ENCODE measurements at regions of chr13 and their contacts with region 1.

Region 1: GRCh38 chr13:28718543-28719226 is at the start of gene SLC46A3:
- DNase-seq: peak; percentile 99
- ATAC-seq: peak; percentile 99
- total RNA-seq, gene SLC46A3: 17.4 TPM

Region 2: GRCh38 chr13:28110414-28110813 is 608.3 kb before region 1 on chr13:
- intact Hi-C with region 1: no loop called
- DNase-seq: no peak
- ATAC-seq: no peak

Region 3: GRCh38 chr13:28376604-28377003 is 342.1 kb before region 1 on chr13:
- intact Hi-C with region 1: no loop called
- DNase-seq: no peak
- ATAC-seq: no peak

Region 4: DNA sequence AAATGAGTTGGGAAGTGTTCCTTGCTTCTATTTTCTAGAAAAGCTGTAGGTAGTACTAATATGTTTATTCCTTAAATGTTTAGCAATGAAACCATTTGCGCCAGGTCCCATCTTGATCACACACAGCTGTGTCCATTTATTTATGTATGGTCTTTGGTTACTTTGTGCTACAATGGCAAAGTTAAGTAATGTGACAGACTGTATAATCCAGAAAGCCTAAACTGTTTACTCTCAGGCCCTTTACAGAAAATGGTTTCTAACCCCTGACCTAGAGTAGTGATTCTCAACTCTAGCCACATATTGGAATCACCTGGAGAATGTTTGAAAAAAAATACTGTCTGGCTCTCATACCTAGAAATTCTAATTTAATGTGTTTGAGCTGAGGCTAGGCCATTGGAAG is 21.2 kb before region 1 on chr13:
- intact Hi-C with region 1: no loop called
- DNase-seq: no peak
- ATAC-seq: no peak

Region 5: GRCh38 chr13:28754698-28755545 is 36.2 kb after region 1 on chr13:
- intact Hi-C with region 1: loop called (anchors 2 kb)
- DNase-seq: no peak
- ATAC-seq: peak; percentile 42

Region 6: GRCh38 chr13:29162638-29163235 is 444.1 kb after region 1 on chr13:
- intact Hi-C with region 1: no loop called
- DNase-seq: no peak
- ATAC-seq: no peak